ENCODE measurements at regions of chrX and their contacts with region 1.

Region 1: GRCh38 chrX:106894392-106894909 is 8.7 kb downstream of the RIPPLY1 start:
- DNase-seq: no peak
- H3K4me3 ChIP-seq: no peak overlapping the region
- H3K27ac ChIP-seq: no peak overlapping the region
- H3K4me1 ChIP-seq: no peaks in the 10 kb centered on the region
- H3K27me3 ChIP-seq: no peaks in the 10 kb centered on the region
- CTCF ChIP-seq: peak; percentile 78

Region 2: DNA sequence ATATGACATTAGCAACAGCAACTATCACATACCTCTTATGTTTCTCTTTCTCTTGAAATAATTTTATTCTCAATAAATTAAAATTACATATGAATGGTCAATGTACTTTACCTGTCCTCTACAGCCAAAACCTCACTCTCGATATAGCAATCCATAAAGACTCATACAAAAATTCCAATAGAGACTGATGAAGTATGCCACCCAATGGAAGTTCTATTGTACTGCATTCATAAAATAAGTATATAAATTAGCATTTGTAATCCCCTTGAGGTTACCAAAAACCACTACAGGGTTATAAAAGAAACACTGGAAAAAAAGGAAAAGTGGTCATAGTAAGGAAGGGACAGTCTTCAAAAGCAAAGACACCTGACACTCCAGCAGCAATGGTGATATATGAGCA is 58.5 kb after region 1 on chrX:
- intact Hi-C with region 1: loop called (anchors 10 kb)
- DNase-seq: no peak
- H3K4me3 ChIP-seq: no peak overlapping the region
- H3K27ac ChIP-seq: no peak overlapping the region
- H3K4me1 ChIP-seq: no peaks in the 10 kb centered on the region
- H3K27me3 ChIP-seq: no peaks in the 10 kb centered on the region
- CTCF ChIP-seq: peak; percentile 48